ENCODE measurements at regions of chrX and their contacts with region 1.

Region 1: DNA sequence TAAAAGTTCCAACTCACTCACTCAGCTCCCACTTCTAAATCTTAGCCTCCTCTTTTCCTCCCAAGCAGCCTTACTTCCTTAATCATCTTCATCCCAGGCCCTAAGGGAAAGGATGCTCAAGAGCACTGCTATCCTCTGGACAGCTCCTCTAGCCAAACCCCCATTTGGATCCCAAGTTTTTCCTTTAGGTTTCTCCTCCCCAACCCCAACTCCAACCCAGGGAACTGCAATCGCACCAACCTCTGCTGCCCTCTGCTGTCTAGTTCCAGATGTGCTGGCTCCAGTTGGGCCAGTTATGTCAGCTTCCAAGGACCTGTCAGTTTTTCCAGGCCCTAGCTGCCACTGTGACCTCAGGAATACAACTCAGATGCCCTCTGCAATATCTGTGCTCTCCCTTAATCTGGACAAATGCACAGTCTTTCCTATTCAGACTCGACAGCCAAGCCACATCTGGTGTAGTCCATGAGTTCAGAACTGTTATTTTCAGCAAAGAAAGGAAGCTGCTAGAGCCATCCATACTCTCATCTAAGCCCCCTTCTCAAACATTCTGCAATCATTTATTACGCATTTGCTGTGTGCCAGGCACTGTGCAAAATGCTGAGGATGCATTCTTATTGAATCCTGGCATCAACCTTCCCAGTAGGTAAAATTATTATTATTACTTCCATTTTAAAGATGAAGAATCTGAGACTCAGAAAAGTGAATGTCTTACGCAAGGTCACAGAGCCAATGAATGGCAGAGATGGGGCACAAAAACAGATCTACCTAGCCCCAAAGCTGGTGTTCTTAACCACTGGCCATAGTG is 12.3 kb upstream of the XPNPEP2 start:
- DNase-seq: no peak
- H3K4me3 ChIP-seq: no peak overlapping the region
- H3K27me3 ChIP-seq: peaks cover 3% of the 10 kb centered on the region; the same call in 1 of the 2 replicates
- CTCF ChIP-seq: peak; percentile 74

Region 2: DNA sequence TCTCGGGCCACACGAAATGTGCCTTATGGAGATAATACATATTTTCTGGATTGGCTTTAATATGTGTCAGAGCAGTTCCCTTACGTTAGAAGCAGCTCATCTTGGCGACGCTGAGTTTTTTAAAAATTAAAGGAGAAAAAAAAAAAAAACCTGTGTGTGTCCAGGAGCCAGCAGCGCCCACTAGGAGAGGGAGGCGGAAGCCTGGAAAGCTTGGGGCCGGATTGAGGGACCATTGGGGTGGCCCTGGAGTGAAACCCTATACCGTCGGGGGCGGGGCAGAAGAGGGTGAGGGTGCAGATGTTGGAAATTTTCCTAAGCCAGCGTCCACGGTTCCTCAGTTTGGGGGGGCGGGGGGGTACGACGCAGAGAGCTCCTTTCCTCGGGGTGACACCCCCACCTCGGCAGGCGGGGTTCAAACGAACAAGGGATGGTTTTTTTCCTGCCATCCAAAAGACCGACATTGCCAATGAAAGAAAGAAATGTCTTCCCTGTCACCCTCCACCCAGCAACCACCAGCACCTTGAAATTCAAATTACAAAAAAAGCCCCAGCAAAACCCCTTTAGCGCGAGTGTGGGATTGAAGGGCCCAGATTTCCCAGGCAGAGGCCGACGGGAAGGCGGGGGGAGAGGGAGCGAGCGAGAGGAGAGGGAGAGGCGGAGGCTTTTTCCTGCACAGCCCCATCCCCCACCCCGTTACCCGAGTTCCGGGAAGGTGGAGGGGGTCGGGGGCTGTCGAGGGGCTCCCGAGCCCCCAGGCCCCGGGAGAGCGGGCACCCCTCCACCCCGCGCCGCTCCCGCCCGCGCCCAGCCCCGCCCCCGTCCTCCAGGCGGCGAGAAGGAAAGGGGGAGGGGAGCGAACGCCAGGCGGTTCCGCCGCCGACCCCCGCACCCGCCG is 204.1 kb before region 1 on chrX:
- CTCF ChIA-PET with region 1: no interaction called
- POLR2A ChIA-PET with region 1: no interaction called
- DNase-seq: no peak
- H3K4me3 ChIP-seq: peak overlapping the region; percentile 87
- H3K27me3 ChIP-seq: no peaks in the 10 kb centered on the region
- CTCF ChIP-seq: peak; percentile 40

Region 3: GRCh38 chrX:129606918-129607317 is 119.6 kb before region 1 on chrX:
- CTCF ChIA-PET with region 1: interaction called, 29 read pairs
- POLR2A ChIA-PET with region 1: no interaction called
- DNase-seq: no peak
- H3K4me3 ChIP-seq: no peak overlapping the region
- H3K27me3 ChIP-seq: 0 out of 2 replicates have a peak, but pooled peaks cover 2% of the 10 kb centered on the region
- CTCF ChIP-seq: peak; percentile 60

Region 4: DNA sequence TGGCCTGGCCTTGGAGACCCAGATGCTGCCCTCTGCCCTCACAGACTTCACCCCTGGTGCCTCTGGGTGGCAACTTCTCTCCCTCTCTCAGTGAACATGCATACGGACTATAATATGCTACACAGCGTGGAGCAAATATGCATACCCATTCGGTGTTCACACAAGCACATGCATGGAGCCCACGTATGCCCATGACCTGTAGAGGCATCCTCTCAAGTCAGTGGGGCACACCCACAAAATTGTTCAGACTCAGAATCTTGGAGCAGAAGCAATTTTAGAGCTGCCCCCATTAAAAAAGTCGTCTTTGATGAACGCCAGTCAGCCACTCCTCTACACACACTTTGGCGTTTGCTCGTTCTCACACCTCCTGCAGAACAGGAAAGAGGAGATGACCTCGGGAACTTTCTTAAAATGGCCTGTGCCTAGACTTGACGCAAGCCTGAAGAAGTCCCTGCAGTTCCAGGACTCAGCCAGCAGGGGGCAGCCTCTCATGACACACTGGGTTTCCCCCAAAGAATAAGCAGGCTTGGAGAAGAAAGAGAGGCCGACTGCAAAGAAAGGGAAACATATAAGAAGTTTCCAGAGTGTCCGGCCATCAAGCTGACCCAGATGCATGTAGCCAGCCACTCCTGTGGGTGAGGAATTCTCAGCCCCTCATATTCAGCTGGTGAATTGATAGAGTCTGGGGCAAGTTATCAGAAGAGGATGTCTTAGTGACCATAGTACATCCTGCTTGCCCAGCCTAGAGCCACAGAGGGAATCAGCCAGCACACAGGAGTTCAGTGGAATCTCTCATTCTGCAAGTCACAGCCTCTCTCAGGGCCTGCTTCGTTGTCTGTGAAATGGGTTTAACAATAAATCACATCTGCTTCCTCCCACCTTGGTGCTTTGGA is 89.0 kb before region 1 on chrX:
- CTCF ChIA-PET with region 1: interaction called, 167 read pairs
- POLR2A ChIA-PET with region 1: no interaction called
- DNase-seq: no peak
- H3K4me3 ChIP-seq: no peak overlapping the region
- H3K27me3 ChIP-seq: peaks cover 2% of the 10 kb centered on the region; the same call in 1 of the 2 replicates
- CTCF ChIP-seq: peak; percentile 86

Region 5: DNA sequence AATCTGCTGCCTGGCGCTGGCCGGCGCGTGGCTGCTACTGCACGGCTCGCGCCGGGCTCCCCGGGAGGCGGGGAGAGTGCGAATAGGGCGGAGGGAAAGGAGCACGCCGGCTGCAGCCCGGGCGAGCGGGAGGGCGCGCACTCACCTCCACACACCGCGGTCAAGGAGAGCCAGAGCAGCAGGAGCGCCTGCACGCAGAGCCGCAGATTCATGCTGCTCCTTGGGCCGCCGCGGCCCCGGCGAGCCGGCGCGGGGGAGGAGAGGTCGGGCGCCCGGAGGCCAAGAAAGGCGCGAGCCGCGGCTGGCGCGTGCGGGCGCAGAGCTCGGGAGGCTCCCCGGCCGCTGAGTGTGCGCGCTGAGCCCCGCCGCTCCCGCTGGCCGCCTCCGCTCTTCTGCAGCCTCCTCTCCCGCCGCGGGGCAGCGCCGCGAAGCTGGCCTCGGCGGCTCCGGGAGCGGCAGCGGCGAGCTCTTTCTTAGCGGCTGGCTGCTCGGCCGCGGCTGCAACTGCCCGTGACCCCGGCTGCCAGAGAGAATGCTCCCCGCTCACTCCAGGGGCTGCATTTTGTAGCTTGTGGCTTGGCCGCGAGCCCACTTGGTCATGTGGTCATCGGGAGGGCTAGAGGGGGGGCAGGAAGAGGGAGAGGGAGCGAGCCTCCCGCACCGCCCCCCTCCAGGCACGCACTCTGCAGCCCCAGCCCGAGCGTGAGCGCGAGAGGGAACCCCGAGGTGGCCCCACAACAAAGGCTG is 71.9 kb before region 1 on chrX and contains the start of gene APLN:
- CTCF ChIA-PET with region 1: interaction called, 19 read pairs
- POLR2A ChIA-PET with region 1: no interaction called
- DNase-seq: no peak
- H3K4me3 ChIP-seq: peak within 1 kb of the TSS; percentile 40
- H3K27me3 ChIP-seq: peaks cover 4% of the 10 kb centered on the region; the same call in 1 of the 2 replicates
- CTCF ChIP-seq: no peak
- polyA plus RNA-seq, gene APLN: 0.09 and 0.11 TPM in 2 replicates

Region 6: DNA sequence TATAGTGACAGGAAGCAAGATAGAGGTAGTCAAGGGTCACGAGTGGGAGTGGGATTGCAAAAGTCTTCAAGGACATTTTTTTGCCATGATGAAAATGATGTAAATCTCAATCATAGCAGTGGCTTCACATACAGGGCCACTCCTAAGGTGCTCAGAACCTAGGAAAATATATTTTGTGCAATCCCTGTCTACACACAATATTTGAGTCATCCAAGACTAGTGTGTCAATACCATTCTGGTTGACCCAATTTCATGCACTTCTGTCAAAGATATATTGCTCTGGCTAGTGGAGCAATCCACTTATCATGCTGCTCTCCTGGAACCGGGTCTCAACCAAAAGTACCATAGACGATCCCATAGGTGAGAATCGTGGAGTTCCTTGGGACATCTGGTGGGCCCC is 11.9 kb before region 1 on chrX:
- CTCF ChIA-PET with region 1: interaction called, 10 read pairs
- POLR2A ChIA-PET with region 1: no interaction called
- DNase-seq: no peak
- H3K4me3 ChIP-seq: no peak overlapping the region
- H3K27me3 ChIP-seq: peaks cover 2% of the 10 kb centered on the region
- CTCF ChIP-seq: no peak

Region 7: GRCh38 chrX:129737916-129738315 is 11.4 kb after region 1 on chrX:
- CTCF ChIA-PET with region 1: interaction called, 29 read pairs
- POLR2A ChIA-PET with region 1: no interaction called
- DNase-seq: no peak
- H3K4me3 ChIP-seq: no peak overlapping the region
- H3K27me3 ChIP-seq: no peaks in the 10 kb centered on the region
- CTCF ChIP-seq: no peak